Activated CD4-positive, alpha-beta T cell treated with anti-CD3 and anti-CD28 coated beads for 36 hours (primary cell): ENCODE measurements at regions of chr16 and their contacts with region 1.

Region 1: DNA sequence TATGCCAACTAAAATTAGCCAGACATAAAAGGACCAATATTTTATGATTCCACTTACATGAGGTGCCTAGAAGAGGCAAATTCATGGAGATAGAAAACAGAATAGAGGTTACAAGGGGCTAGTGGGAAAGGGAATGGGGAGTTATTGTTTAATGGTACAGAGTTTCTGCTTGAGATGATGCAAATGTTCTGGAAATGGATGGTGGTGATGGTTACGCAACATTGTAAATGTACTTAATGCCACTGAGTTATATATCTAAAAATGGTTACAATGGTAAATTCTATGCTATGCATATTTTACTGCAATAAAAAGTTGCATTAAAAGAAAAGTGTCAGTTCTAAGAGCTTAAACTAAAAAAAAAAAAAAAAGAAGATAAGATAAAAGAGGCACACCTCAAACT is 17.9 kb downstream of the MT1X start:
- DNase-seq: no peak
- ATAC-seq: no peak
- H3K4me3 Mint-ChIP-seq: no peak overlapping the region
- H3K27ac Mint-ChIP-seq: no peak overlapping the region
- H3K4me1 Mint-ChIP-seq: peaks cover 8% of the 10 kb centered on the region
- H3K27me3 Mint-ChIP-seq: no peaks in the 10 kb centered on the region

Region 2: DNA sequence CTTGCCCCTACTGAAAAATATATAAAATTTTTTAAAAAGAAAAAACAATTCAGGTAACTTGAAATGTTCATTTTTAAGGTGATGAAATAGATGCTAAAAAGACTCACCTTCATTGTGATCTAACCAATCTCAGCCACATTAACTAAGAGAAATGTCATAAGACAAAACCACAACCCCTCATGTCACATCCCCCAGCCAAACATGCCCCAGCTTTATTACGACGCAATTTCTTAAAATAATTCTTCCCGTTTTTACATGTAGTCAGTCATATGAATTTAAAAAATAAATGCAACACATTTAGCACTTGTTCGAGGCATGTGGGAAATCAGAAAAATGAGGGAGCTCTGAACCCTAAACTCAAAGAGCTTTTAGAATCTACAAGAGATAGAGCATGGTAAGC is 284.3 kb before region 1 on chr16:
- CTCF ChIA-PET with region 1: no interaction called
- POLR2A ChIA-PET with region 1: no interaction called
- intact Hi-C with region 1: no loop called
- DNase-seq: no peak
- ATAC-seq: no peak
- H3K4me3 Mint-ChIP-seq: no peak overlapping the region
- H3K27ac Mint-ChIP-seq: peak overlapping the region; percentile 5
- H3K4me1 Mint-ChIP-seq: peaks cover 16% of the 10 kb centered on the region
- H3K27me3 Mint-ChIP-seq: no peaks in the 10 kb centered on the region

Region 3: GRCh38 chr16:56513972-56514371 is 186.2 kb before region 1 on chr16:
- CTCF ChIA-PET with region 1: interaction called, 13 read pairs
- POLR2A ChIA-PET with region 1: no interaction called
- intact Hi-C with region 1: loop called (anchors 1 kb)
- DNase-seq: peak; percentile 62
- ATAC-seq: peak; percentile 84
- H3K4me3 Mint-ChIP-seq: no peak overlapping the region
- H3K27ac Mint-ChIP-seq: no peak overlapping the region
- H3K4me1 Mint-ChIP-seq: peaks cover 34% of the 10 kb centered on the region
- H3K27me3 Mint-ChIP-seq: no peaks in the 10 kb centered on the region

Region 4: GRCh38 chr16:56600398-56600999 is 99.7 kb before region 1 on chr16:
- CTCF ChIA-PET with region 1: interaction called, 28 read pairs
- POLR2A ChIA-PET with region 1: interaction called, 3 read pairs
- intact Hi-C with region 1: loop called in 1 of 2 experiments (anchors 1 kb)
- DNase-seq: peak; percentile 53
- ATAC-seq: peak; percentile 64
- H3K4me3 Mint-ChIP-seq: no peak overlapping the region
- H3K27ac Mint-ChIP-seq: no peak overlapping the region
- H3K4me1 Mint-ChIP-seq: peaks cover 6% of the 10 kb centered on the region
- H3K27me3 Mint-ChIP-seq: peaks cover 6% of the 10 kb centered on the region

Region 5: DNA sequence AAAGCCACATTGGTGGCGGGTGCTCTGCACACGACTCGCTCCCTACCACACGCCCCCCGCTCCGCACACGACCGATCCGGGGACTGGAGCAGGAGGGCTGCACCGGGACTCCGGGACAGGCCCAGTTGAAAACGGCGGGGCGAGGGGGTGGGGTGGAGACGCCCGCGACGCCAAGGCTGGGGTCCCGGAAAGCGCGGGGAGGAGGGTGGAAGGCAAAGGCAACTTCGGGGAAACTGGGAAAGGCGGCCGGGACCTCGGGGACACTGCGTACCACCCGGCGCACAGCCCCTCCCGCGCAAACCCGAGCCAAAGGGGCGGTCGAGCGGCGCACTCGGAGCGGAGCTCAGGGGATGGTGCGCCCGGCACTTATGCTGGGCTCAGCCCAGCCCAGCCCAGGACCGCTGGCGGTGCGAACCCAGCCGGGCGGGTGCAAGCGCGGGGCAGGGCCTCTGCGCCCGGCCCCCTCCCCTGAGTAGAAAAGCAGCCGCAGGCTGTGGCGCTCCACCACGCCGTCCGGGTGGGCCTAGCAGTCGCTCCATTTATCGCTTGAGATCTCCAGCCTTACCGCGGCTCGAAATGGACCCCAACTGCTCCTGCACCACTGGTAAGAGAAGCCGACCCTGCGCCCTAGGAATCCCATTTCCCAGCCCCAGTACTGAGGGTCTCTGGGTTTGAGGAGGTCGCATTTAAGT is 67.9 kb before region 1 on chr16 and contains the start of gene MT1M:
- CTCF ChIA-PET with region 1: no interaction called
- POLR2A ChIA-PET with region 1: no interaction called
- intact Hi-C with region 1: no loop called
- DNase-seq: peak; percentile 22
- ATAC-seq: no peak
- H3K4me3 Mint-ChIP-seq: peak within 1 kb of the TSS; percentile 52
- H3K27ac Mint-ChIP-seq: no peak within 1 kb of the TSS
- H3K4me1 Mint-ChIP-seq: peaks cover 18% of the 10 kb centered on the region
- H3K27me3 Mint-ChIP-seq: peaks cover 60% of the 10 kb centered on the region
- total RNA-seq, gene MT1M: not detected

Region 6: DNA sequence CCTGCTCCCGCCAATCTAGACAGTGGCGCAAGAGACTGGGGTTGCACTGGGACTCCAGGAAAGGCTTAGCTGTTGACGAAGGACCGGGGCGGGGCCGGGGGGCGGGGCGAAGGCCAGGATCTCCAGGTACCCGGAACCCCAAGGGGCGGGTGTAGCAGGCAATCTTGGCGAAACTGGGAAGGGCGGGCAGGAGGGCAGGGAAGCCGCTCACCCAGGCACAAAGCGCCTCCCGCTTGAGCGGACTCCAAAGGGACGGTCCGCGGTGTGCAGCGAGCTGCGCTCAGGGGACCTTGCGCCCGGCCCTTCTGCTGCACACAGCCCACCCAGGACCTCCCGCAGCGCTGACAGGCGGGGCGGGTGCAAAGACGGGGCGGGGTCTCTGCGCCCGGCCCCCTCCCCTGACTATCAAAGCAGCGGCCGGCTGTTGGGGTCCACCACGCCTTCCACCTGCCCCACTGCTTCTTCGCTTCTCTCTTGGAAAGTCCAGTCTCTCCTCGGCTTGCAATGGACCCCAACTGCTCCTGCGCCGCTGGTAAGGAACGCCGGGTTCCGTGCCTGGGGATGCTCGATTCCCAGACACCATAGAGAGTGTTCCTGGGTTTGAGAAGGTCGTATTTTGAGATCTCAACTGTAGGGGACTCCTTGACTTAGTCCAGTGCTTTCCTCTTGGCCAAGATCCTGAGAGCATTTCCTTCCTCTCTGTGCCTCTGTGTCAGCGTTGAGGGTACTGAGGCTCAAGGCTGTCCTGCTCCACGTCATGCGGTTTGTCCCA is 42.5 kb before region 1 on chr16 and contains the start of gene MT1F:
- CTCF ChIA-PET with region 1: interaction called, 5 read pairs
- POLR2A ChIA-PET with region 1: no interaction called
- intact Hi-C with region 1: loop called in 1 of 2 experiments (anchors 1 kb)
- DNase-seq: peak; percentile 84
- ATAC-seq: peak; percentile 85
- H3K4me3 Mint-ChIP-seq: peak within 1 kb of the TSS; percentile 79
- H3K27ac Mint-ChIP-seq: peak within 1 kb of the TSS; percentile 76
- H3K4me1 Mint-ChIP-seq: peaks cover 16% of the 10 kb centered on the region
- H3K27me3 Mint-ChIP-seq: peaks cover 2% of the 10 kb centered on the region
- total RNA-seq, gene MT1F: 7.0 to 7.1 TPM

Region 7: DNA sequence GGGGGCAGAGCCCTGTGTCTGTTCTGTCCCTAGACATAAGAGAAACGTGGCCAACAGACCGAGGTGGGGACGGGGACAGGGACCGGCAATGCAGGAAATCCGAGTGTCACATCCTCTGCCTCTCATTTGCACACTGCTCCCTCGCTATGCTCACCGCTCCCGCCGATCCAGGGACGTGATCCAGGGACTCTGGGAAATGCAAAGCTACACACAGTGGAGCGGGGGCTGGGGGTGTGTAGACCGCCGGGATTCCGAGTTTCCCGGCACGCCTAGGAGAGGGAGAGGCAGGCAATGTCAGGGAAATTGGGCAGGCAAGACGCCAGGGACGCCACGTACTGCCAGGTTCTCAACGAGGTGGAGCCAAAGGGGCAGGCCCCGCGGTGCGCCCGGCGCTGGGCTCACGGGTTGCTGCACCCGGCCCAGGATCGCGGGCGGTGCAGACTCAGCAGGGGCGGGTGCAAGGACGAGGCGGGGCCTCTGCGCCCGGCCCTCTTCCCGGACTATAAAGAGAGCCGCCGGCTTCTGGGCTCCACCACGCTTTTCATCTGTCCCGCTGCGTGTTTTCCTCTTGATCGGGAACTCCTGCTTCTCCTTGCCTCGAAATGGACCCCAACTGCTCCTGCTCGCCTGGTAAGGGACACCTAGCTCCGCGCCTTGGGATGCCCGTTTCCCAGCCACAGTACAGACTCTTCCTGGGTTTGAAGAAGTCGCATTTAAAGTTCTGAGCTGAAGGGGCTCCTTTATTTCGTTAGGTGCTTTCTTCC is 18.1 kb before region 1 on chr16 and contains the start of gene MT1X:
- CTCF ChIA-PET with region 1: interaction called, 28 read pairs
- POLR2A ChIA-PET with region 1: interaction called, 10 read pairs
- intact Hi-C with region 1: loop called in 1 of 2 experiments (anchors 1 kb)
- DNase-seq: peak; percentile 96
- ATAC-seq: peak; percentile 96
- H3K4me3 Mint-ChIP-seq: peak within 1 kb of the TSS; percentile 89
- H3K27ac Mint-ChIP-seq: peak within 1 kb of the TSS; percentile 97
- H3K4me1 Mint-ChIP-seq: peaks cover 22% of the 10 kb centered on the region
- H3K27me3 Mint-ChIP-seq: no peaks in the 10 kb centered on the region
- total RNA-seq, gene MT1X: 46.8 to 59.3 TPM